ENCODE measurements at regions of chr16 and their contacts with region 1.

Region 1: DNA sequence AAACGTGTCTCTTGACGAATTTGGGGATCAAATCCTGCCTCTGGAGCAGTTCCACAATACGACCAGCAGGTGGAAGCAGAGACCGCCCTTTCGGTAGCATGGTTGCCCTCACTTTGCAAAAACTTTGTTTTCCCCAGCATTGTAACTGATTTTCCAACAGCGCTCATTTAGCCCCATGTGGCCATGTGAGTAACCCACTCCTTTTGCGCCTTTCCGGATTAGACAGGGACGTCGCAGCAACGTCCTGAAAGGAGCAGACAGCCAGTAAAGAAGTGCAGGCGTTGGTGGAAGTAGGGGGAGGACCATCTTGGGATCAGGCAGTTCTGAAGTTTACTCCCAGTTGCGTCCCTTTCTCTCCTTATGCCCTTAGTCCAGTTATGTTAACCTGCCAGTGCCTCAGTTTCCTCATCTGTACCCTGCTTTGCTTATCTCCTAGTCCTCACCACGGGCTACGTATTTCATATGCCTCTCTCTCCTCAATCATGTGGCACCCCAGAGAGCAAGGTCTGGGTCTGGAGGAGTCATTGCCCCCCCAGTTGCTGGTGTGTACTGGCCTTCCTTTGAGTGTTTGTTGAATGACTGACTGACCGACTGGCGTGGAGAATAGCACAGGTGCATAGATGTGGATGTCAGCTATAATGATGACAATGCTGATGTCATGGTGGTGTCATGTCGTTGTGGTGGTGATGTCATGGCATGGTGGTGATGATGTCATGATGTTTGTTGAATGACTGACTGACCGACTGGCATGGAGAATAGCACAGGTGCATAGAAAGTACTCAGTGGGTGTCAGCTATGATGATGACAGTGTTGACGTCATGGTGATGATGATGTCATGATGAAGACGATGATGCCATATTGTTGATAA is 22.3 kb downstream of the TMEM114 start:
- DNase-seq: peak; percentile 79
- CTCF ChIP-seq: peak; percentile 86

Region 2: DNA sequence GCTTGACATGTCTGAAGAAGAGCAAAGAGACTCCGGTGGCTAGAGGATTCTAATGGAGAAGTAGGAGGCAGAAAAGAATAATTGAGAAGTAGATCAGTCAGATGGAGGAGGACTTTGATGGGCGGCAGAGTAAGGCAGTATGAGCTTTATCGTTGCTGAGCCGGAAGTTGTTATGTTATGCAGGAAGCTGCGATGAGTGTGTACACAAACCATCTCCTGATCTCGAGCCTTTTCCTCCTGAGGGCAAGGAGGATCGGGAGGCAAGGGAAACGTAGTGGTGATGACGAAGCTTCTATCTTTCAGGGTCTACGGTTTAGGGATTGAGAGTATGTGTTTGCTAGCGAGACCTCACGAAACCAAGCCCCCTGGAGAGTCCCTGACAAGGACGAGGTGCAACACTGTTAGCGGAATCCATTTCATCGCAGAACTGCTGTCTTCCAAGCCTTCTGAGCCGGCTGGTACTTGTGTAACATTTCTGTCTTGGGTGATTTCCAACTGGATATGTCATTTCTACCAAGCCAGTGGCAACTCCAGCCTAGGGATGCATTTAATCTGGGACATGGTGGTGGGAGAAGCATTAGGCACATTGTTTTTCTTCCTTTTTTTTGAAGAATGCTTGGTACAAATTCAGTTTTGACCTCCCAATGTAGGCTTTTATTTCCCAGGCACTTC is 1189.8 kb before region 1 on chr16:
- CTCF ChIA-PET with region 1: no interaction called
- POLR2A ChIA-PET with region 1: no interaction called
- DNase-seq: no peak
- CTCF ChIP-seq: no peak

Region 3: DNA sequence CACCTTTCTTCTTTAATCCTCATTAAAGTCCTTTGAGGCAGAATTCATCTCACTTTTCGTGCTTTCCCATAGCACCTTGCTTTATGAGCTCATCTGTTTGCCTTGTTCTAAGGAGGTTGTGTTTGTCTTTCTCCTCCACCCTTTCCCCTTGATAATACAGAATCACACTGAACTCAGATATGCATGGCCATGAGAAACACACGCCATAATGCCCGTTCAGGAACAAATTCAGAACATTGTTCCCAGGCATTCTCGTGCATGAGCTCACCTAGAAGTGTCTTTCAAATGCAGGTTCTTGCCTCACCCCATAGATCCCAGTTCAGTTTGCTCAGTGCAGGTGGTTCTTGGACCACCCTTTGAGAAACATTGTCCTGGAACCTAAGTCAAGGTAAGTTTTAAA is 48.8 kb before region 1 on chr16:
- CTCF ChIA-PET with region 1: no interaction called
- POLR2A ChIA-PET with region 1: no interaction called
- DNase-seq: no peak
- CTCF ChIP-seq: no peak

Region 4: DNA sequence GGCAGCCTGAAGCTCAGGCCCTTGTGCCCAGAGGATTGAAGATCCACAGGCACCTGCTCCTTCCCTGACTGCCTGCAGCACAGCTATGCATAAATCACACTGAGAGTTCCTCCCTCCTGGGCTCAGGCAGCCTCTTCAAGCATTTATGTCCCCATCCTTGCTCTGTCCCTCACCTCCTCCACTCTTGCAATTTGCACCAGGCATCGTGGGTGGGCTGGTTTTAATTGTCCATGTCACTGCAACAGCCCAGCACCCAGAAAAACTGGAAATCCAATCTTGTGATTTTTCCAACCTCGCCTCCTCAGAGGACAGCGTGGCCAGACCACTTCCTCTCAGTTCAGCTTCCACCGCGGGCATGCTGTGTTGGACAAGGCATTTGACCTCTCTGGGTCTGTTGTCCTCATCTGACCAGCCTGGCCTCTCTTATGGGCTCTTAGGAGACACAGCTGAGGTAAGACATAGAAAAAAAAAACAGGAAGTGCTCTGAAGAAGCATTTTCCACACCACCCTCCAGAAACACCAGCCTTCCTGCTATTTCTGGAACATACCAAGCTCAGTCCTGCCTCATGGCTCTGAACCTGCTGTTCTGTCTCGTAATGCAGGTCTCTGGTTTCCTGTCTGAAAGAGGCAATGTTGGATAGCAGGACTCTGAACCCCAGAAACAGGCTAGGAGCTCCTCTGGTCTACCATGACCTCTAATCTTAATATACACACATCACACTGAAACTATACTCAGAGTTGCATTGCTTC is 14.0 kb after region 1 on chr16:
- CTCF ChIA-PET with region 1: interaction called, 41 read pairs
- POLR2A ChIA-PET with region 1: no interaction called
- DNase-seq: no peak
- CTCF ChIP-seq: no peak

Region 5: DNA sequence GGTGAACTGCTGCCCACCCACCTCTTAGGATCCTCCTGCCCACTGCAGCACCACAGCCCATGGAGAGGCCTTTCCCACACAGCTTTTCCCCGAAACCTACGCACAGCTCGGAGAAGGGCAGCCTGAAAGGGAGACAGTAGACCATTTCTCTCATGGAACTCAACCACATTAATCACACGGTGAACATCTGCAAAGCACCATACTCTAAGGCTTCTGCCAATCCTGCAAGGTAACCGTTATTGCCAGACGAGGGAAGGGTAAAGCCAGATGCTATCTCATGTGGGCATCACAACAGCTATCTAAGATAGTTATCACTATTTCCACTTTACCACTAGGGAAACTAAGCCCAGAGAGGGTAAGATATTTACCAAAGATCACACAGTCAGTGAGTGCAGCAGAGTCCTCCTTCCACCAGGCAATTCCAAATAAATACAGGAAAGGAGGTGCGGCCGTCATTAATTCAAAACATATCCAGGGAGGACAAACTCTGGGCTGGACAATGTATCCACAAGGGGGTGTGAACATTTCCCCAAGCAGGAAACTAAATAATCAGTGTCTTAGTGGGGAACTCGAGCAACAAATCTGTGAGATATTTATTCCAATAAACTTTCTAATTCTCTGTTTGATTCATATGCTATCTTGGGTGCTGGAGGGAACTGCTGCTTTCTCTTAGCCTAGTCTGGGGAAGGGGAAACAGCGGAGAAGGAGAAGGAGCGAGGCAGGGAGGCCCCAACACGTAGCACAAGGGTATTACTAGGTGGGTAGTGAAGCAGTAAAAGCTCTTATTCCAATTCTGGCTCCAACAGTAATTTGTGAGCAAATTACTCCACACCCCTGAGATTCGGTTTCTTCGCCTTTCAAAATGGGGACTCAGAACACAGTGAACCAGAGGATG is 228.7 kb after region 1 on chr16:
- CTCF ChIA-PET with region 1: interaction called, 10 read pairs
- POLR2A ChIA-PET with region 1: no interaction called
- DNase-seq: no peak
- CTCF ChIP-seq: no peak